GM10248 (cell line): ENCODE measurements at regions of chr2 and their contacts with region 1.

Region 1: DNA sequence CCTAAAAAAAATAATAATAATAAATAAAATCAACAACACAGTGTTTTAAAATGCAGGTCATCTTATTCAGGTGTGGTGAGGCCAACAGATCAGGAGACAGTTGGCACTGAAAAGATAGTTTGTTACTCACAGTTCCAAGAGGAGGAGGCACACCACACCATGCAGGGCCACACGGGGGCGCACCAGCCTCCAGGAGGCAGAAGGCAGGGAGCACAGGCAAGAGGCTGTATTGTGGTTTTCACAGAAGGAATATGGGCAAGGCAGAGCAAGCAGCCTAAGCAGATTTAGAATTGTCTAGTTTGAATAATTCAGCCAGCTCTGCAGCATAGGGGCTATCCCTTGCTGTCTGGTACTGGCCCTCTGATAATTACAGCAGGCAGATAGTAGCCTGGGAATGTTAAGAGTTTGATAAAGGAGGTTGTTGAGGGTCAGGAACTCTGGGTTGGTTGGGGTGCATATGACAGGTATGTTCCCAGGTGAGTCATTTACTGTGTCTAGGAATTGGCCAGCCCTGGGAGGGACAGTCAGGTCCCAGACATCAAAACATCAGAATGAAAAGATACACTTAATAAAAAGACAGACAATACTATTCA is 31.3 kb downstream of the KIAA2012 start:
- DNase-seq: peak; percentile 43
- CTCF ChIP-seq: peak; percentile 77

Region 2: GRCh38 chr2:202056392-202057010 is 47.9 kb before region 1 on chr2:
- CTCF ChIA-PET with region 1: no interaction called
- POLR2A ChIA-PET with region 1: no interaction called
- DNase-seq: no peak
- CTCF ChIP-seq: no peak

Region 3: GRCh38 chr2:202091476-202091875 is 12.9 kb before region 1 on chr2:
- CTCF ChIA-PET with region 1: interaction called, 15 read pairs
- POLR2A ChIA-PET with region 1: no interaction called
- DNase-seq: no peak
- CTCF ChIP-seq: no peak

Region 4: DNA sequence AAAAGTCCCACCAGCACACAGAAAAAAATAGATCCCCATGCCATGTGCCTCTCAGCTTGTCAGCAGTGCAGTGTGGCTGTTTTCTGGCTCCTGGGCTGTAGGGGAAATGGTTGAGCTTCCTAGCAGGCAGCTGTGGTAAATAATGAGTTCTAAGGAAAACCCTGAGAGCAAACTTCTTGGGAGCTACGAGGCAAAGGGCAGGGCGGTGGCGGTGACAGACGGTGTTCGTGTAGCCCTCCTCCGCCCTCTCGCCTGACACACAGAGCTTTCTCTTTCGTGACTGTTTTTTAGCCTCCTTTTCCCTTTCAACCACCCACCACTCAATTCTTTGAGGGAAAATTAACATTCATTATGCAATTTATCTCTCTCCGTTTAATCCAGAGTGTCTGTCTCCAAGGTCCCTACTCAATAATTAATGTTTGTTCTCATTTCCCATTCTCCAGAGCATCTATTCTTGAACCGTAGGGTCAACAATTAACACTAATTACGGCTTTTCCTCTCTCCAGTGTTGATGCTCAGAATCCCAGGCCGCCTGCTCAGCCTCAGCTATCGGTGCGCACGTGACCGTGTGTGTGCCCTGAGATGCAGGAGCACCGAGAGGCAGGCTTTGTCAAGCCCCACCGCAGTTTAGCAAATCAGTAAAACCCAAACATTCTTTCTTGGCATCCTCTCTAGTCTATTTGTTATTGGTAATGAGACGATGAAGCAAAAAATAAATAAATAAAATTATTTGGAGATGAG is 18.8 kb after region 1 on chr2:
- CTCF ChIA-PET with region 1: no interaction called
- POLR2A ChIA-PET with region 1: no interaction called
- DNase-seq: no peak
- CTCF ChIP-seq: no peak

Region 5: GRCh38 chr2:202221873-202222272 is 117.5 kb after region 1 on chr2:
- CTCF ChIA-PET with region 1: no interaction called
- POLR2A ChIA-PET with region 1: no interaction called
- DNase-seq: no peak
- CTCF ChIP-seq: no peak